ENCODE measurements at regions of chr19 and their contacts with region 1.

Region 1: DNA sequence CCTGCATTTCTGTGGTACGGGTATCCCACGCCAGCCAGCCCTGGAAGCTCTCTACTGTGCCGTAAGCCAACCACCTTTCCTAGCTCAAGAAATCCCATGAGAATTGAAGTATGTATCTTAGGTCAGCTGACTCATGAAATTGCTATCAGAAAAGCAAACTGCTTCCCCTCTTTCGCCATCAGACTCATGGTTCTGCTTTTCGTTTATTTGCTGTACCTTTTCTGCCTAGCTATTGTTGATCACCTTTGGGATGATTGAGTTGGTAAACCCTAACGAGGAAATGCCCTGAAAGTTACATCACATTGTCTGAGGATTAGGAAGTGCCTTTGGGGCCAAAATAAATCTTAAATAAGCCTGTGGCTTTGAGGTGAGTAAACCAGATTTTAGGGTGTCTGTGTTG is at the start of gene ADGRE3:
- DNase-seq: no peak
- H3K4me3 ChIP-seq: no peak within 1 kb of the TSS
- H3K27ac ChIP-seq: no peak within 1 kb of the TSS
- H3K4me1 ChIP-seq: no peaks in the 10 kb centered on the region
- H3K27me3 ChIP-seq: no peaks in the 10 kb centered on the region
- CTCF ChIP-seq: no peak
- EP300 ChIP-seq: no peak
- POLR2A ChIP-seq: no peak
- total RNA-seq, gene ADGRE3: 0.13 to 0.15 TPM in 2 of 7 donors, not detected in the others

Region 2: GRCh38 chr19:14472202-14472938 is 202.4 kb before region 1 on chr19:
- intact Hi-C with region 1: no loop called
- DNase-seq: peak; percentile 64 to 85 (median 80)
- H3K4me3 ChIP-seq: no peak overlapping the region
- H3K27ac ChIP-seq: no peak overlapping the region
- H3K4me1 ChIP-seq: peaks cover 4% of the 10 kb centered on the region
- H3K27me3 ChIP-seq: no peaks in the 10 kb centered on the region
- CTCF ChIP-seq: peak; percentile 89 to 91 (median 90)
- EP300 ChIP-seq: no peak
- POLR2A ChIP-seq: peak; percentile 15

Region 3: GRCh38 chr19:14571695-14572490 is 102.9 kb before region 1 on chr19 and contains the start of gene NDUFB7:
- intact Hi-C with region 1: no loop called
- DNase-seq: peak; percentile 81 to 88 (median 84)
- H3K4me3 ChIP-seq: peak within 1 kb of the TSS; percentile 100
- H3K27ac ChIP-seq: no peak within 1 kb of the TSS
- H3K4me1 ChIP-seq: peaks cover 10% of the 10 kb centered on the region
- H3K27me3 ChIP-seq: no peaks in the 10 kb centered on the region
- CTCF ChIP-seq: peak; percentile 14 to 77 (median 56)
- EP300 ChIP-seq: no peak
- POLR2A ChIP-seq: no peak
- total RNA-seq, gene NDUFB7: 86.9 to 429 (median 143) TPM

Region 4: DNA sequence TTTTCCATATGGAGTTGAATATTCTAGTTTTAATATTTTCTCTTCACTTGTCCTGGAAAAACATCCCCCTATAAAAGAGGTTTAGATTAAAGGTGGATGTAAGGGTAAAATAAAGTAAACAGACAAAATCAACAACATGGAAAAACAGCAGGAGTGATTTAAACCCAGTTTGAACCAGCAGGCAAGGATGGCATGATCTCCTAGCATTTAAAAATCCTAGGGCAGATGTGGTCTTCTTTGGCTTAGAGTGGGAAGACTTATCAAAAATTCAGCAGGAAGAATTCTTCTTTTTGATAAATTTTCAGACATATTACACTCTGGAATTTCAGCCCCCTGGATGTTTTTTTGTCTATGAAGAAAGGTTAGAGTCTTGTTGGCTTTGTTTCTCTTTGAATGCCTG is 55.4 kb before region 1 on chr19:
- intact Hi-C with region 1: loop called in 1 of 4 experiments (anchors 2 kb)
- DNase-seq: no peak
- H3K4me3 ChIP-seq: no peak overlapping the region
- H3K27ac ChIP-seq: no peak overlapping the region
- H3K4me1 ChIP-seq: no peaks in the 10 kb centered on the region
- H3K27me3 ChIP-seq: no peaks in the 10 kb centered on the region
- CTCF ChIP-seq: no peak
- EP300 ChIP-seq: no peak
- POLR2A ChIP-seq: no peak

Region 5: DNA sequence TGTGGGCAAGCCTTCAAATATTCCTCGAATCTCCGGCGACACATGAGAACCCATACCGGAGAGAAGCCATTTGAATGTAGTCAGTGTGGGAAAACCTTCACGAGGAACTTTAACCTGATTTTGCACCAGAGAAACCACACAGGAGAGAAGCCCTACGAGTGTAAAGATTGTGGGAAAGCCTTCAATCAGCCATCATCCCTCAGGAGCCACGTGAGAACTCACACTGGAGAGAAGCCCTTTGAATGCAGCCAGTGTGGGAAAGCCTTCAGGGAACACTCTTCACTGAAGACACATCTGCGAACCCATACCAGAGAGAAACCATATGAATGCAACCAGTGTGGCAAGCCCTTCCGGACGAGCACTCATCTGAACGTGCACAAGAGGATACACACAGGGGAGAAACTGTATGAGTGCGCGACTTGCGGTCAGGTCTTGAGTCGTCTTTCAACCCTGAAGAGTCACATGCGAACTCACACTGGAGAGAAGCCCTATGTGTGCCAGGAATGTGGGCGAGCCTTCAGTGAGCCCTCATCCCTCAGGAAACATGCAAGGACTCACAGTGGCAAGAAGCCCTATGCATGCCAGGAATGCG is 43.9 kb after region 1 on chr19:
- intact Hi-C with region 1: no loop called
- DNase-seq: no peak
- H3K4me3 ChIP-seq: no peak overlapping the region
- H3K27ac ChIP-seq: no peak overlapping the region
- H3K4me1 ChIP-seq: no peaks in the 10 kb centered on the region
- H3K27me3 ChIP-seq: no peaks in the 10 kb centered on the region
- CTCF ChIP-seq: no peak
- EP300 ChIP-seq: no peak
- POLR2A ChIP-seq: no peak